ENCODE measurements at regions of chr2 and their contacts with region 1.

Region 1: GRCh38 chr2:207746131-207746530 is 23.6 kb downstream of the FZD5 start:
- DNase-seq: peak; percentile 53
- H3K4me3 ChIP-seq: no peak overlapping the region
- H3K27ac ChIP-seq: no peak overlapping the region
- H3K27me3 ChIP-seq: no peaks in the 10 kb centered on the region
- CTCF ChIP-seq: peak; percentile 96

Region 2: GRCh38 chr2:207448006-207448405 is 298.1 kb before region 1 on chr2:
- CTCF ChIA-PET with region 1: no interaction called
- POLR2A ChIA-PET with region 1: no interaction called
- DNase-seq: no peak
- H3K4me3 ChIP-seq: no peak overlapping the region
- H3K27ac ChIP-seq: no peak overlapping the region
- H3K27me3 ChIP-seq: no peaks in the 10 kb centered on the region
- CTCF ChIP-seq: no peak

Region 3: GRCh38 chr2:207473049-207473930 is 272.8 kb before region 1 on chr2:
- CTCF ChIA-PET with region 1: no interaction called
- POLR2A ChIA-PET with region 1: no interaction called
- DNase-seq: peak; percentile 65
- H3K4me3 ChIP-seq: no peak overlapping the region
- H3K27ac ChIP-seq: no peak overlapping the region
- H3K27me3 ChIP-seq: no peaks in the 10 kb centered on the region
- CTCF ChIP-seq: peak; percentile 89

Region 4: GRCh38 chr2:207734264-207734635 is 11.9 kb before region 1 on chr2:
- CTCF ChIA-PET with region 1: interaction called, 19 read pairs
- POLR2A ChIA-PET with region 1: no interaction called
- DNase-seq: no peak
- H3K4me3 ChIP-seq: no peak overlapping the region
- H3K27ac ChIP-seq: no peak overlapping the region
- H3K27me3 ChIP-seq: no peaks in the 10 kb centered on the region
- CTCF ChIP-seq: peak; percentile 70

Region 5: GRCh38 chr2:207974216-207974605 is 228.1 kb after region 1 on chr2:
- CTCF ChIA-PET with region 1: interaction called, 85 read pairs
- POLR2A ChIA-PET with region 1: no interaction called
- DNase-seq: no peak
- H3K4me3 ChIP-seq: no peak overlapping the region
- H3K27ac ChIP-seq: no peak overlapping the region
- H3K27me3 ChIP-seq: no peaks in the 10 kb centered on the region
- CTCF ChIP-seq: no peak

Region 6: GRCh38 chr2:208072250-208072892 is 326.2 kb after region 1 on chr2:
- CTCF ChIA-PET with region 1: interaction called, 332 read pairs
- POLR2A ChIA-PET with region 1: interaction called, 4 read pairs
- DNase-seq: peak; percentile 50
- H3K4me3 ChIP-seq: no peak overlapping the region
- H3K27ac ChIP-seq: no peak overlapping the region
- H3K27me3 ChIP-seq: no peaks in the 10 kb centered on the region
- CTCF ChIP-seq: peak; percentile 75

Measured in AG04450 (cell line).